Endothelial cell of umbilical vein (primary cell): ENCODE measurements at regions of chr5 and their contacts with region 1.

Region 1: GRCh38 chr5:157142317-157143126 is at the start of gene MED7:
- DNase-seq: peak; percentile 99
- H3K4me3 ChIP-seq: peak within 1 kb of the TSS; percentile 77 to 90 (median 79)
- H3K27ac ChIP-seq: peak within 1 kb of the TSS; percentile 79
- H3K4me1 ChIP-seq: peaks cover 6% of the 10 kb centered on the region
- H3K27me3 ChIP-seq: no peaks in the 10 kb centered on the region
- CTCF ChIP-seq: no peak
- POLR2A ChIP-seq: peak; percentile 80
- total RNA-seq, gene MED7: 7.4 and 9.2 TPM in 2 replicates

Region 2: DNA sequence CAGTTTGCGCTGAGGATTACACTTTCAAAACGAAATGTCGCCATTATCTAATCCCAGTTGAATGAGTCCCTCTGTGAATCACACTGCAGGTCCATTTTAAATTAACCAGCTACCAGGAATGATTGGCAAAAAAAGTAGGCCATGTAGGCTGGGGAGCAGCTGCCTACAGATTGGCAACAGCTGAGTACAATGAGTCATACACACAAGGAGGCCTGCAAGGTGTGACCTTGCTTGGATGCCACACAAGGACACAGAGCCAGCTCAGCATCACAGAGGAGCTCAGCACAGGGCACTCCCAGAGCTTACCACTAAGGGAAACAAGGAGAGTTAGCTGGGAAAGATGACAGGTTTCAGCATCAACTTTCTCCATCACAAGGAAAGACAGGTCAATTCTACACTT is 96.5 kb before region 1 on chr5:
- CTCF ChIA-PET with region 1: no interaction called
- POLR2A ChIA-PET with region 1: no interaction called
- dilution Hi-C with region 1: no loop called
- intact Hi-C with region 1: no loop called
- DNase-seq: no peak
- H3K4me3 ChIP-seq: no peak overlapping the region
- H3K27ac ChIP-seq: no peak overlapping the region
- H3K4me1 ChIP-seq: no peaks in the 10 kb centered on the region
- H3K27me3 ChIP-seq: no peaks in the 10 kb centered on the region
- CTCF ChIP-seq: no peak
- POLR2A ChIP-seq: no peak

Region 3: GRCh38 chr5:157100140-157100679 is 42.3 kb before region 1 on chr5:
- CTCF ChIA-PET with region 1: no interaction called
- POLR2A ChIA-PET with region 1: no interaction called
- dilution Hi-C with region 1: no loop called
- intact Hi-C with region 1: no loop called
- DNase-seq: no peak
- H3K4me3 ChIP-seq: no peak overlapping the region
- H3K27ac ChIP-seq: no peak overlapping the region
- H3K4me1 ChIP-seq: no peaks in the 10 kb centered on the region
- H3K27me3 ChIP-seq: no peaks in the 10 kb centered on the region
- CTCF ChIP-seq: no peak
- POLR2A ChIP-seq: no peak

Region 4: GRCh38 chr5:157157293-157157891 is 14.9 kb after region 1 on chr5:
- CTCF ChIA-PET with region 1: no interaction called
- POLR2A ChIA-PET with region 1: no interaction called
- dilution Hi-C with region 1: no loop called
- intact Hi-C with region 1: no loop called
- DNase-seq: no peak
- H3K4me3 ChIP-seq: no peak overlapping the region
- H3K27ac ChIP-seq: no peak overlapping the region
- H3K4me1 ChIP-seq: no peaks in the 10 kb centered on the region
- H3K27me3 ChIP-seq: no peaks in the 10 kb centered on the region
- CTCF ChIP-seq: no peak
- POLR2A ChIP-seq: no peak

Region 5: DNA sequence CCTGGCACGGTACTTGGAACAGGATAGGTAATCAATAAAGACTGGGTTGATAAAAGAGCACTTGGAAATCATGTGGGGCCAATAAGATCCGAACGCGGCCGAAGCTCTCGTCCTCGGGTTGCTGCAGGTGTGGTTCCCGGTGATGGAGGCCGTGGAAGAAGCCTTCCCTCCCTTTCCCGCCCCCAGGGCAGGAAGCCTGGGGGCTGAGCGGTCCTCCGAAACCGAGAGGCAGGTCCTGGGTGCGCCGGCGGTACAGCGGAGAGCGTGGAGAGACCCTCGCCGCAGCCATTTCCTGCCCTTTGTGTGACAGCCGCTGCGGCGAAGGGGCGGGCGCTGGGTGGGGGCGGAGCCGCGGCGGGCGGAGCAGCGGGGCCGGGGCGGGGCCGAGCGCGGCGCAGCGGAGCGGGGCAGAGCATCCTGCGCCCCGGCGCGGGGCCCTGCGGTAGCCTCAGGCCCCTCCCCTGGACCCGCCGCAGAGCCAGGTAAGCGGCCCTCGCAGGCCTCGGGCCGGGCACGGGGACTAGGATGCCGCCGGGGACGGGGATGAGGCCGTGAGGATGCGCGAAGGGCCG is 123.3 kb after region 1 on chr5 and contains the start of gene CYFIP2:
- CTCF ChIA-PET with region 1: no interaction called
- POLR2A ChIA-PET with region 1: no interaction called
- dilution Hi-C with region 1: no loop called
- intact Hi-C with region 1: loop called (anchors 5 kb)
- DNase-seq: peak; percentile 30
- H3K4me3 ChIP-seq: peak within 1 kb of the TSS; percentile 50 to 60 (median 58)
- H3K27ac ChIP-seq: no peak within 1 kb of the TSS
- H3K4me1 ChIP-seq: peaks cover 4% of the 10 kb centered on the region
- H3K27me3 ChIP-seq: peaks cover 8 to 10% of the 10 kb centered on the region in 2 experiments
- CTCF ChIP-seq: no peak
- POLR2A ChIP-seq: no peak
- total RNA-seq, gene CYFIP2: 22.2 and 22.4 TPM in 2 replicates

Region 6: GRCh38 chr5:157731272-157732129 is 589.0 kb after region 1 on chr5 and contains the start of gene THG1L:
- CTCF ChIA-PET with region 1: no interaction called
- POLR2A ChIA-PET with region 1: no interaction called
- dilution Hi-C with region 1: no loop called
- intact Hi-C with region 1: loop called (anchors 5 kb)
- DNase-seq: peak; percentile 98
- H3K4me3 ChIP-seq: peak within 1 kb of the TSS in 2 of 3 experiments; percentile 65 to 79
- H3K27ac ChIP-seq: peak within 1 kb of the TSS; percentile 33
- H3K4me1 ChIP-seq: no peaks in the 10 kb centered on the region
- H3K27me3 ChIP-seq: no peaks in the 10 kb centered on the region
- CTCF ChIP-seq: no peak
- POLR2A ChIP-seq: peak; percentile 73
- total RNA-seq, gene THG1L: 3.7 and 7.6 TPM in 2 replicates